Upper lobe of right lung (tissue), 1 donor: ENCODE measurements at regions of chr1 and their contacts with region 1.

Region 1: DNA sequence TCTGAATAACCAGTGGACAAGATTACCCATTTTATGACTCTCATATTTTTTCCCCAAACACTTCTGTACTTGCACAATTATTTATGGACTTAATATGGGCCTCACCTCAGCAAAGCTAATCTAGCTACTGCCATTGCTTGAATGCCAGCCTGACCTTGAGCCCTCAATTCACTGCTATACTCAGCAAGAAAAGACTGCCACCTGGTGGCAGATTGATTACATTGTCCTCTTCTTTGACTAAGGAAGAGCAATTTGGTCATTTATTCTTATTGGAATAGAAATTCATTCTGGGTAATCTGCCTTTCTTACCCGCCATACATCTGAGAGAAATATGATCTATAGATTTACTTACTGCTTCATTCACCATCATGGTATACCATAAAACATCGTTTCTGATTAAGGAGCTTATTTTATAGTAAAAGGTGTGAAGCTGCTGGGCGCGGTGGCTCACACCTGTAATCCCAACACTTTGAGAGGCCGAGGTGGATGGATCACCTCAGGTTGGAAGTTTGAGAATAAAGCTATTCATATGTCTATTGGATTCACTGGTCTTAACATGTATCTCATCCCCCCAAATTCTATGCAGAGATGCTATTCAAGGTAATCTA is 32.9 kb upstream of the DIPK1A start:
- DNase-seq: no peak
- ATAC-seq: peak; percentile 88
- H3K4me3 ChIP-seq: no peak overlapping the region
- H3K27ac ChIP-seq: no peak overlapping the region
- H3K4me1 ChIP-seq: no peaks in the 10 kb centered on the region
- H3K27me3 ChIP-seq: no peaks in the 10 kb centered on the region
- CTCF ChIP-seq: peak; percentile 90

Region 2: DNA sequence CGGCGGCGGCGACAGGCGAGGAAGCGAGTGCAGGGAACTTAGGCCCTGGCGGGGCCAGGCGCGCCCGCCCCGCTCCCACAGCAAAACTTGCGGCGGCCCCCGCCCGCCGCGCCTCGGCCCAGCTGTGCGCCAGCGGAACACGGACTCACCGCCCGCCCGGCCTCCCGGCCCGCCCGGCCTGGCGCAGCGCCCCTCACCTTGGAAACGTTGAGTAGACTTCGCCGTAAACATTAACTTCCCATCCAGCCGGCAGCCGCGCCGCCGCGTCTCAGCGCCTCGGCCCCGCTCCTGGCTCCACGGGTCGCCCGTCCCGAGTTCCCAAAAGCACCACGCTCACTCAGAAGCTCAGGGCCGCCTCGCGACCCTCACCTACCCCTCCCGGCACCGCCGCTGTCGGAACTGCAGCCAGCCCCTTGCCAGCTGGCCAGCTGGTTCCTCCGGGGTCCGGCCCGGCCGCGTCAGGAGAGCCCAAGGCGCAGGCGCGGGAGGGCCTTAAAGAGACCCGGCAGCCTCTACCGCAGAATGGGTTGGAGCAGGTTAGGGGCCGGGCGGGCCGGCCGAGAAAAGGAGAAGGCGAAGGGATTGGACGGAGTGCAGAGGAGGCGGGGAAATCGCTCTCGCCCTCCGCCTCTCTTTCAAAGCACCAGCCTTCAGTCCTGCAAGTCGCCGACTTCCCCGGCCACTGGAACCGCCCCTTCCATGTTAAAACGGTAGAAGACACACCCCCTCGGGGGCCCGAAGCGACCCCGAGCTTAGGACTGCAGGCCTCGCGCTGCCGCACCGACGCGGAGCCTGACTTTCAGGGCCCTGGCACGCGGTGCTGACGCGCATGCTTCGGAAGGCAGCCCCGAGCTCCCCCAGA is 209.3 kb before region 1 on chr1 and contains the start of gene EVI5:
- intact Hi-C with region 1: no loop called
- DNase-seq: peak; percentile 98
- ATAC-seq: peak; percentile 98
- H3K4me3 ChIP-seq: peak within 1 kb of the TSS; percentile 85
- H3K27ac ChIP-seq: peak within 1 kb of the TSS; percentile 100
- H3K4me1 ChIP-seq: peaks cover 9% of the 10 kb centered on the region
- H3K27me3 ChIP-seq: no peaks in the 10 kb centered on the region
- CTCF ChIP-seq: peak; percentile 42
- total RNA-seq, gene EVI5: 43.7 TPM

Region 3: GRCh38 chr1:92843429-92844352 is 150.5 kb before region 1 on chr1:
- intact Hi-C with region 1: no loop called
- DNase-seq: no peak
- ATAC-seq: no peak
- H3K4me3 ChIP-seq: no peak overlapping the region
- H3K27ac ChIP-seq: no peak overlapping the region
- H3K4me1 ChIP-seq: no peaks in the 10 kb centered on the region
- H3K27me3 ChIP-seq: no peaks in the 10 kb centered on the region
- CTCF ChIP-seq: no peak

Region 4: DNA sequence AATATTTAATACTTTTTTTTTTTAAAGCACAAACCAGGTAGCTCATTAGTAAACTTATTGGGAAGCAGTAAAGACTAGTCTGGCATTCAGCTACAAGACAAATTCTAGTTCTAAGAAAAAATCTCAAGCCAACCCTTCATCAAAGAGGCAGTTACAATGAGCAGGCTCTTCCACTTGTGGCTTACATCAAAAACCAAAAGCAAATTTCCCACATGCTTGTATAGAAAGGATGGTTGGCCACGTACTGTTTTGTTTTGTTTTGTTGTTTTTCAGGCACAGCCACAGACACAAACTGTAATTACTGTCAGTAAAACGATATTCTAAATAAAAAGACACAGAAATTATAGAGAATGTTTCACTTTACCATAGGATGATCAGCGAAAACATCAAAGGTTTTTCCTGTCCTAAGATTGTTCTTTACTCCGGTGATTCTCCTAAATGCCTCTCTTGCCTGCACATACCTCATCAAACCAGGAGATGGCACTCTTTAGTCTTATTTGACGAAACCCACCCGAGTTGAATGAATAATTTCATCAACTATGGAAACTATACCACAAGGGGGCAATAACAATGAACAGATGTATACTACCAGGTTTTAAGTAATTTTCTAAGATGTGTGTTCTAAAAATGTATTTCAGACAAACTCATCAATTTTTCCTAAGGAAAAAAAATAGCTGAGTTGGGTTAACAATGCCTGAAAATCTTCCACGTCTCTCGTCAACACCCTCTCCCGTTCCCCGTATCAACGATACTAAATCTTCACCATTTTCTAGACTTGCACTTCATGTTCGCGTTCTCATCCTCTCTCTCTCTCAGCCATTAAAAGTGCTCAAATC is 135.4 kb before region 1 on chr1:
- intact Hi-C with region 1: loop called (anchors 10 kb)
- DNase-seq: no peak
- ATAC-seq: peak; percentile 97
- H3K4me3 ChIP-seq: peak overlapping the region; percentile 3
- H3K27ac ChIP-seq: no peak overlapping the region
- H3K4me1 ChIP-seq: no peaks in the 10 kb centered on the region
- H3K27me3 ChIP-seq: no peaks in the 10 kb centered on the region
- CTCF ChIP-seq: peak; percentile 96

Region 5: GRCh38 chr1:93196591-93196990 is 202.4 kb after region 1 on chr1:
- intact Hi-C with region 1: no loop called
- DNase-seq: no peak
- ATAC-seq: no peak
- H3K4me3 ChIP-seq: no peak overlapping the region
- H3K27ac ChIP-seq: no peak overlapping the region
- H3K4me1 ChIP-seq: no peaks in the 10 kb centered on the region
- H3K27me3 ChIP-seq: no peaks in the 10 kb centered on the region
- CTCF ChIP-seq: no peak